ENCODE measurements at regions of chr10 and their contacts with region 1.

Region 1: GRCh38 chr10:3811291-3811870 is 26.4 kb upstream of the KLF6 start:
- DNase-seq: peak; percentile 49
- H3K27ac ChIP-seq: peak overlapping the region; percentile 93
- CTCF ChIP-seq: no peak

Region 2: DNA sequence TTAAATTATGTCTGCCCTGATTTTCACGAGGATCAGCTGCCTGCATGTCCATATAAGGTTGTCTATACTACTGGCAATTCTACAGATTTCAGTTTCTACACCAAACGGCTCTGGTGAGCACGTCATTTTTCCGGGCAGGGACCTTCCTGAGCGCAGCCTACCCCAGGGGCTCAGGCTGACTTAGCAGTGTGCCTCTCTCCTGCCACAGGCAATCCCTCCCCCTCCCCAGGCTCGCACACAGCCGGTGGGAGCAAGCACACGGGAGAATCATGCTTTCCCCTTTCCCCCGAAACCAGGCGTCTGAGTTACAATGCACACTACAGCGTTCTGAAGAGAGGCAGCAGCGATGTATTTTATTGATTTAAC is 28.1 kb before region 1 on chr10:
- CTCF ChIA-PET with region 1: interaction called, 5 read pairs
- POLR2A ChIA-PET with region 1: interaction called, 10 read pairs
- DNase-seq: no peak
- H3K27ac ChIP-seq: peak overlapping the region; percentile 99
- CTCF ChIP-seq: no peak

Region 3: GRCh38 chr10:4525093-4525492 is 713.7 kb after region 1 on chr10:
- CTCF ChIA-PET with region 1: interaction called, 10 read pairs
- POLR2A ChIA-PET with region 1: no interaction called
- DNase-seq: no peak
- H3K27ac ChIP-seq: no peak overlapping the region
- CTCF ChIP-seq: no peak